IMR-90 (cell line): ENCODE measurements at regions of chr3 and their contacts with region 1.

Region 1: DNA sequence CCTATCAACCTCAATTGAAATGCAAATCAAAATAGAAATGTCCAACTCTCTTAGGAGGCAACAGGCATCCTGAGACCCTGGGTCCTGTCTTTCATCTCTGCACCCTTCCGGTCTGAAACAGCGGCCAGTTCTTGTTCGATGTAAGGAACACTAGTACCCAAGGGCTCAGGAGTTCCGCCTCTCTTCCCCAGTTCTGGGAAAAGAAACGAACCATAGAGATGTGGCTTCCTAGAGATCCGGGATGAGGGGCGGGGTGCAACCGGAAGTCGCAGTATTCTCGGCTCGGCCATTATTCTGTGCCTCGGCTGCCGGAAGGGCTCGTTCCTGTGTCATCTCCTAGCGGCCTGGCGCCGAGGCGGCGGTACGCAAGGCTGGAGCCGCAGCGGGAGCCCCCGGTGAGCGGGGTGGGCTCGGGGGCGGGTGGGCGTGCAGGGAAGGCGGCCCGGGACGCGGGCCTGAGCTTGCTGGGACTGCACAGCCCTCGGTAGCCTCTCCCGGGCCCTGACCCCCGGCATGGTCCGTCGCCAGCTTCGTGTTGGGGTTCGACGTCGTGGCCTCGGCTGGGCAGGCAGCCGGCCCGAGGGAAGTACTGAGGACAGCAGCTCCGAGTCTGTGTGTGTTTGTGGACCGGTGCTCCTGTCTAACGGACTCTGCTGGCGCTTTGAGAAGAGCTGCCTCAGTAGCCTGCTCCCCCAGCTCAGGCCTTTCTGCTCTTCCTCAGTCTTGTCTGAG is at the start of gene ZNF197:
- DNase-seq: peak; percentile 90
- ATAC-seq: peak; percentile 95
- H3K4me3 ChIP-seq: peak within 1 kb of the TSS; percentile 90
- H3K27ac ChIP-seq: peak within 1 kb of the TSS; percentile 80
- H3K4me1 ChIP-seq: no peaks in the 10 kb centered on the region
- H3K27me3 ChIP-seq: no peaks in the 10 kb centered on the region
- CTCF ChIP-seq: 0 out of 2 replicates have a peak, but pooled peaks have one; percentile 4
- POLR2A ChIP-seq: peak; percentile 44; the same call in 1 of the 2 replicates
- RAD21 ChIP-seq: no peak; the same call in 1 of the 2 replicates
- total RNA-seq, gene ZNF197: 14.9 and 18.9 TPM in 2 replicates

Region 2: GRCh38 chr3:44323341-44323955 is 301.5 kb before region 1 on chr3:
- CTCF ChIA-PET with region 1: no interaction called
- POLR2A ChIA-PET with region 1: no interaction called
- dilution Hi-C with region 1: no loop called
- in situ Hi-C with region 1: loop called (anchors 25 kb)
- intact Hi-C with region 1: loop called (anchors 1 kb)
- DNase-seq: peak; percentile 71
- ATAC-seq: peak; percentile 86
- H3K4me3 ChIP-seq: no peak overlapping the region
- H3K27ac ChIP-seq: no peak overlapping the region
- H3K4me1 ChIP-seq: no peaks in the 10 kb centered on the region
- H3K27me3 ChIP-seq: peaks cover 3% of the 10 kb centered on the region; the same call in 1 of the 2 replicates
- CTCF ChIP-seq: peak; percentile 88
- POLR2A ChIP-seq: no peak
- RAD21 ChIP-seq: peak; percentile 86

Region 3: GRCh38 chr3:44338010-44338827 is 286.7 kb before region 1 on chr3 and contains the start of gene TCAIM:
- CTCF ChIA-PET with region 1: no interaction called
- POLR2A ChIA-PET with region 1: no interaction called
- dilution Hi-C with region 1: no loop called
- in situ Hi-C with region 1: loop called (anchors 25 kb)
- intact Hi-C with region 1: no loop called
- DNase-seq: peak; percentile 96
- ATAC-seq: peak; percentile 96
- H3K4me3 ChIP-seq: peak within 1 kb of the TSS; percentile 63
- H3K27ac ChIP-seq: peak within 1 kb of the TSS; percentile 86
- H3K4me1 ChIP-seq: 0 out of 2 replicates have a peak, but pooled peaks cover 2% of the 10 kb centered on the region
- H3K27me3 ChIP-seq: peaks cover 3% of the 10 kb centered on the region
- CTCF ChIP-seq: no peak
- POLR2A ChIP-seq: peak; percentile 45; the same call in 1 of the 2 replicates
- RAD21 ChIP-seq: no peak
- total RNA-seq, gene TCAIM: 21.5 and 21.9 TPM in 2 replicates

Region 4: DNA sequence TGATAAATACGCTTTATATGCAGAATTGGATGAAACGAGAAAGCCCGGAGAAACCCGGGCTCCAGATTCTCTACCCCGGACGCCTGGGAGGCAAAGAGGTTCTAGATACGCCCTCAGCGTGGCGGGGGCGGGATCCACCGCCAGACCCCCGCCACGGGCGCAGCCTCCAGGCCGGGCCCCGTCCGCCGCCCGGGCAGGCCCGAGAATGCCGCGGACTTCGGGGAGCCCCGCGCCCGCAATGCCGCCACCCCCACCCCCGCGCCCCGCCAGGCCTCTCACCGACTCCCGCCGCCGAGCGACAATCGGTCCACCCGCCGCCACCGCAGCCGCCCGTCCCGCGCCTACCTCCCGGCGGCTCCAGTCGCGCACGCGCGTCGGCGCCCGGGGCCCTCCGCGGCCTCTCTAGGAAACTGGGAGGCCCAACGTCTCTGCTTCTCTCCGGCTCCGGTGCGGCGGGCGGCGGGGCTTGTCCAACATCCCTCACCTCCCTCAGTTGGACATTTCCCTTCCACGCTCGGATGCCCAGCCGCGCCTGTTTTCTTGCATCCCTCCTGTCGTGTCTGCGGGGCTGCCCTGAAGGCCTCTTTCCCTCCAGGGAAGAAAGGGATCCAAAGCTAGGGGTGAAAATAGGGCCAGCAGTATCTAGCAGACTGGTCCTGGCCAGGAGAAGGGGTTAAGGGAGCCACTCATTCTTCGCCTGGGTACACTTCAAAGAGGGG is 147.4 kb before region 1 on chr3 and contains the start of gene ZNF445:
- CTCF ChIA-PET with region 1: no interaction called
- POLR2A ChIA-PET with region 1: no interaction called
- dilution Hi-C with region 1: no loop called
- in situ Hi-C with region 1: no loop called
- intact Hi-C with region 1: loop called (anchors 10 kb)
- DNase-seq: peak; percentile 74
- ATAC-seq: peak; percentile 97
- H3K4me3 ChIP-seq: peak within 1 kb of the TSS; percentile 55
- H3K27ac ChIP-seq: peak within 1 kb of the TSS; percentile 74
- H3K4me1 ChIP-seq: no peaks in the 10 kb centered on the region; the same call in 1 of the 2 replicates
- H3K27me3 ChIP-seq: no peaks in the 10 kb centered on the region
- CTCF ChIP-seq: no peak
- POLR2A ChIP-seq: peak; percentile 65; the same call in 1 of the 2 replicates
- RAD21 ChIP-seq: no peak
- total RNA-seq, gene ZNF445: 6.3 and 6.4 TPM in 2 replicates

Region 5: DNA sequence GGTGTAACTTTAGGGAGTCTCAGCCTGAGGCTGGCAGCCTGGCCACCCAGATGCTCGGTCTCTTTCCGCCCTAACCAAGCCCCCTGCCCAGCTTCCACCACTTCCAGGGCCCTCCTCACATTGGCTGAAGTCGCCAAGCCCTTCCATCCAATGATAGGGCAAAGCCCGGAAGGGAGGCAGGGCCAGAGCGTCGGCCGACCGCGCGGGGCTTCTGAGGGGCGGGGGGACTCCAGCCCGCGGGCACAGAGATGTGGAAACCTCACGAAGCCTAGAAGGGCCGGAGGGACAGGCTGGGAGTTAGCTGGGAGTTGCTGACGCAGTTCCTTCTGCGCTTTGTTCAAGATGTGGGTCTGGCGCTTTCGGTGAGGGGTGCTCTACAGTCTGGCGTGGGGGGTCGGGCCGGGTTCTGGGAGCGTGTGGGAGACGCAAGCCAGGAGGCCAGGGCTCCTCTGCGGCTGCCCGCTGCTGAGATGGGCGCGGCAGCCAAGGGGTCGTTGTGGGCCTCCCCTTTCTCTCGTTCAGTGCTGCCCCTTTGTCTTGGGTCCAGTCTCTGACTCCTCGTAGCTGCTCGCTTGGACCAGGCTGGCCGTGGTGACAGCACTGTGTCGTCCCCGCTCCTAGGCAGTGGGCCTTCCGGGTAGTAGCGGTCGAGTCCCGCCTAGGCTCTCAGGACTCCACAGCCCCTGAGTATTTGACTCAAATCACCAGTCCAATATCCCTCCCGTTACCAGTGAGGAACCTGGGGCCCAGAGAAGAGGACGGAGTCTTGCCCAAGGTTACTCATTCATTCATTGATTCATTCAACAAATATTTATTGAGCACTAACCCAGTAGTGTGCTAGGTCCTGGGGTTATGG is 40.0 kb before region 1 on chr3 and contains the start of gene ZNF660:
- CTCF ChIA-PET with region 1: no interaction called
- POLR2A ChIA-PET with region 1: no interaction called
- dilution Hi-C with region 1: no loop called
- in situ Hi-C with region 1: no loop called
- intact Hi-C with region 1: loop called (anchors 1 kb)
- DNase-seq: peak; percentile 67
- ATAC-seq: peak; percentile 98
- H3K4me3 ChIP-seq: peak within 1 kb of the TSS; percentile 63
- H3K27ac ChIP-seq: peak within 1 kb of the TSS; percentile 83
- H3K4me1 ChIP-seq: peaks cover 2% of the 10 kb centered on the region; the same call in 1 of the 2 replicates
- H3K27me3 ChIP-seq: no peaks in the 10 kb centered on the region
- CTCF ChIP-seq: no peak
- POLR2A ChIP-seq: peak; percentile 61; the same call in 1 of the 2 replicates
- RAD21 ChIP-seq: no peak
- total RNA-seq, gene ZNF660: 1.3 and 1.4 TPM in 2 replicates

Region 6: DNA sequence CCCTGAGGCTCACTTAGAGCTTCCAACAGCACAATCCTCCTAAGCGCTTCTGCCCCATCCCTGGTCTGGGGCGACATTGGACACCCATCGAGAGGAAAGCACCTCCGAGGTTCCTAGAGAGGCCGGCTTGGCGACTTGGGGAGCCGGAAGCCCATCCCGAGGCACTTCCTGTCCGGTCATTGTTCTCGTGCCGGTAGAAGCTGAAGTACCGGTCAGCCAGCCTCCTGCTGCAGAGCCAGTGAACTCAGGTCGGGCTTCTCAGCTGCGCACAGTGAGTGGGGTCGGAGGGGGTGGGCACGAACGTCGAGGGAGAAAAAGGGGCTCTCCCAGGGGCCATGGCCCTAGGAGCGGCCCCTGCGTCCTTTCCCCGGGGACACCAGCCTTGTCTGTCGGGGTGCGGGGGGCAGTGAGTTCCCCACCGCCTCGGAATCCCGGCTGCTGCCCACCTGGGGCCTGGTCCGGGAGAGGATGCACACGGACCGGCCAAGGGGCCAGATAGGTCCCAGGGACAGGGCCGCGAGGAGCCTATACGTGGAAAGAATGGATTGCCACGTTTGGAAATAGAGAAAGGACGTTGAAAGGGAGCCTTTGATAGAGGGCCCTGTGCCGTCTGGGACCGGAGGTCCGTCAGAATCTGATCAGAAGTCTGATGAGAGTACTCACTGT is 23.8 kb after region 1 on chr3 and contains the start of gene ZNF35:
- CTCF ChIA-PET with region 1: no interaction called
- POLR2A ChIA-PET with region 1: interaction called, 4 read pairs
- dilution Hi-C with region 1: no loop called
- in situ Hi-C with region 1: no loop called
- intact Hi-C with region 1: loop called (anchors 1 kb)
- DNase-seq: peak; percentile 92
- ATAC-seq: peak; percentile 98
- H3K4me3 ChIP-seq: peak within 1 kb of the TSS; percentile 81
- H3K27ac ChIP-seq: peak within 1 kb of the TSS; percentile 65
- H3K4me1 ChIP-seq: no peaks in the 10 kb centered on the region; the same call in 1 of the 2 replicates
- H3K27me3 ChIP-seq: no peaks in the 10 kb centered on the region
- CTCF ChIP-seq: no peak
- POLR2A ChIP-seq: peak; percentile 71
- RAD21 ChIP-seq: no peak
- total RNA-seq, gene ZNF35: 19.2 and 19.5 TPM in 2 replicates